SK-N-SH (cell line): ENCODE measurements at regions of chr3 and their contacts with region 1.

Region 1: DNA sequence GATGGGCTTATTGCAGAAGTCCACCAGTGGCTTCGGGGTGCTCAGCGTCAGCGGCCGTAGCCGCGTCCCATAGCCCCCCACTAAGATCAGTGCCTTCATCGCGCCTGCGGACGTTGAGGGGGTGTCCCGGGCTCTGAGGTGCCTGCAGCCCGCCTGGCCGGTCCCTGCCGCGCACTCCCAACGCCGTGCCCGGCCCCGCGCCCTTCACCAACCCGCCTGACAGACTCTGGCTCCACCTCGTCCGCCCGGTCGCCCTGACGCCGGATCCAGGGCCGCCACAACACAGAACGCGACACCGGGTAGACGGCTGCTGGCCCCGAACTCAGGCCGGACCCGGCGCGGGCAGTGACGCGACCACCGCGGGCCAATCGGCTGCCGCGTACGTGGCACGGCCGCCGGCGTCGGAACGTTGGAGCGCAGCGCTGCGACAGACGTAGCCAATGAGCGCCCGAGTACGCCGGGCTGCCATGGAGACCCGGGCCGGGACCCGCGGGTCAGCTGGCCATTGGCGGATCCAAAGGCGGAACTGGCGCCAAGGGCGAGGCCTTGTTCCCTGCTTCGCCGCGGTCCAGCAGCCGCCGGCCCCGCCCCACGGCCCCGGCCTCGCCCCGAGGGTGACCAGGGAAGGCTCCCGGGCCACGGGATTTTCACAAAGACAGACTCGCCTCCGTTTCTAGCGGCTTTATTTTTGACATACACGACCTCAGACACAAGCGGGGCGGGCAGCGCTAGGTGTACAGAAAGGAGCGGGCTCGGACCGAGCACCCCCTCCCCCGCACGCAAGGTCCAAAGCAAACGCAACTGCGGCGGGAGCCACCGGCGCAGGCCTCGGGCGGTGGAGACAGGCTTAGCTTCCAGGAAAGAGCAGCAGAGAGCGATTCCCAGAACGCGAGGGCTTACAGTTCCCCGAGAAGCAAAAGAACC is at the start of gene GMPPB:
- DNase-seq: peak; percentile 98
- H3K4me3 ChIP-seq: peak within 1 kb of the TSS; percentile 98 to 99
- H3K27ac ChIP-seq: peak within 1 kb of the TSS; percentile 81 to 87
- H3K4me1 ChIP-seq: peaks cover 8 to 23% of the 10 kb centered on the region in 2 experiments; a peak in 2 of 4 replicates
- H3K27me3 ChIP-seq: no peaks in the 10 kb centered on the region
- CTCF ChIP-seq: no peak
- EP300 ChIP-seq: 0 out of 4 replicates have a peak, but pooled peaks of 1 of the 2 experiments have one; percentile 15
- RAD21 ChIP-seq: no peak
- polyA plus RNA-seq, gene GMPPB: 25.1 and 28.3 TPM in 2 replicates

Region 2: DNA sequence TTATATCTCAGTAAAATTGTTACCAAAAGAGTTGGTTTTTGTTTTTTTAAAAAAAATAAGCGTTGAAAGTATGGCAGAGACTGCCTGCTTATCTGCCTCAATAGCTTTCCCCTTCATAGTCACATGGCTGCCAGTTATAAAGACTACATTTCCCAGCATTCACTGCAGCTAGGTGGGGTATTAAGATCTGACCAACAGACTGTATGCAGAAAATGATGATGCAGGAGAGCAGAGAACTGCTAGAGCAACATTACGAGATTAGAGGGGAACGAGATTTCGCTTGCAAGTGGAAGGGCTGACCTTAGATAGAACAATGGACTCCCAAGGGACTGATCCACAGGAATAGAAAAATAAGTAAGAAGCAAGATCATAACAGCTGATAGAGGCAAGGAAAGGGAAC is 326.4 kb before region 1 on chr3:
- CTCF ChIA-PET with region 1: no interaction called
- POLR2A ChIA-PET with region 1: no interaction called
- DNase-seq: peak; percentile 61
- H3K4me3 ChIP-seq: no peak overlapping the region
- H3K27ac ChIP-seq: no peak overlapping the region
- H3K4me1 ChIP-seq: no peaks in the 10 kb centered on the region
- H3K27me3 ChIP-seq: no peaks in the 10 kb centered on the region
- CTCF ChIP-seq: no peak
- EP300 ChIP-seq: no peak
- RAD21 ChIP-seq: no peak

Region 3: GRCh38 chr3:49703443-49703927 is 20.4 kb before region 1 on chr3:
- CTCF ChIA-PET with region 1: interaction called, 76 read pairs
- POLR2A ChIA-PET with region 1: interaction called, 3 read pairs
- DNase-seq: peak; percentile 92
- H3K4me3 ChIP-seq: no peak overlapping the region
- H3K27ac ChIP-seq: no peak overlapping the region
- H3K4me1 ChIP-seq: no peaks in the 10 kb centered on the region
- H3K27me3 ChIP-seq: no peaks in the 10 kb centered on the region
- CTCF ChIP-seq: peak; percentile 70
- EP300 ChIP-seq: no peak
- RAD21 ChIP-seq: peak; percentile 77

Region 4: DNA sequence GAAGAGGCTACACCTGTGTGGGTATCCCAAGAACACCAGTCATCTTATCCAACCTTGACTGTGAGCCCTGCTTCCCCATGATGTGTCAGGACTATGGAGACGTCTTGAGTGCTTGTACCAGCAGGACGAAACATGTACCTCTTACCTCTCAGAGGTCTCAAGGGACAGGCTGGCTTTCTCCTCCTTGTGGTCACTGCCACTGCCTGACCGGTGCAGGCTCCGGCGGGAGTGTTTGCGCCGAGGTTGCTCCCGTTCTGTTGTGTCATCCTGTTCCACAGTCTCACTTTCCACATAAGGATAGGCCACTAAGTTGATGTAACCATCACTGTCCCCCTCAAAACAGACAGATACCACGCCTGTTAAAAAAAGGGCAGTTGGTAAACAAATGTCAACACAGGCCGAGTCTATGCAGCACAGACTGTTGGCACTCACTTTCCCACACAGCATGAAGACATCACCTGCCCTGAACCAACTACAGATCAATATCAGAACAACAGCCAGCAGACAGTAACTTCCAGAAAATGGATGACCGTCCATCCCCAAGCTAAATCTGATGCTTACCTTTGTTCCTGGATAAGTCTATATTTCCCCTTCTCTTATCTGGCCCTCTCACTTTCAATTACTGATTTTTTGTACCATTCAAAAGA is 14.3 kb after region 1 on chr3:
- CTCF ChIA-PET with region 1: no interaction called
- POLR2A ChIA-PET with region 1: no interaction called
- DNase-seq: no peak
- H3K4me3 ChIP-seq: no peak overlapping the region
- H3K27ac ChIP-seq: no peak overlapping the region
- H3K4me1 ChIP-seq: no peaks in the 10 kb centered on the region
- H3K27me3 ChIP-seq: no peaks in the 10 kb centered on the region
- CTCF ChIP-seq: no peak
- EP300 ChIP-seq: no peak
- RAD21 ChIP-seq: no peak